ENCODE measurements at regions of chrX and their contacts with region 1.

Region 1: DNA sequence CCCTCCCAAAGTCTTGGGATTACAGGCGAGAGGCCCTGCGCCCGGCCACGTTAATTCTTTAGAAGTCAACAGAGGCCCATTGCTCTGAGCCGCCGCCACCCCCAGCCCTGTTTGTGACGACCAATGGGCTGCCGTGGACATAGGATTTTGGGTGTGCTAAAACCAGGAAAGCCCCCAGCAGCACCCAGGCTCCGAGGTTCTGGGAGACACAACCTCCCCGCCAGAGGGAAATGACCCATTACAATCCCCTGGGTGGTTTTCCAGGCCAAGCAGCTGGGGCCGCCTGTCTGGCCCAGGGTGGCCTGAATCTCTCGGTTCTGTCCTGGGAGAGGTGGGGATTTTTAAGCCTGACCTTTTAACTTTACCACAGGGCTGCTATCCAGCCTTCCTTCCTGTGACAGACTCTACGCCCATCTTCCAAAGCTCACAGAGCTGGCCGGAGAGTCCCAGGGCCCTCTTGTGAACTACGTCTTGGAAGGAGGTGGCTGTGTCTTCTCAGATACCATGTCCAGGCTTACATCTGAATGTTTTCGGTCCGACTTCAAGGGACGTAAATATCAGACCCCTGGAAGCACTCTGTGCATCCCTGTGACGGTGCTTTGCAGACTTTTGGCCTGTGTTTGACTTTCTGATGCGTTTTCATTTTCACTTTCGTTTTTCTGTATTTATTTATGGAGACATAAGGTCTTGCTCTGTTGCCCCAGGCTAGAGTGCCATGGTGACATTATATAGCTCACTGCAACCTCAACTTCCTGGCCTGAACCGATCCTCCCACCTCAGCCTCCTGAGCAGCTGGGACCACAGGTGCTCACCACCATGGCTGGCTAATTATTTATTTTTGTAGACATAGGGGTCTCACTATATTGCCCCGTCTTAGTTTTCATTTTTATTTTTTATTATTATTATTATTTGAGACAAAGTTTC is 36.0 kb downstream of the P2RY8 start:
- DNase-seq: peak in 2 of 3 donors; percentile 41 to 48
- H3K4me3 ChIP-seq: peak overlapping the region in 1 of 3 experiments; percentile 36
- H3K4me3 Mint-ChIP-seq: peak overlapping the region in 1 of 2 donors; percentile 48
- H3K27ac ChIP-seq: peak overlapping the region; percentile 62 to 79
- H3K27ac Mint-ChIP-seq: peak overlapping the region; percentile 59 to 99 (median 90)
- H3K4me1 ChIP-seq: peaks cover 51 to 53% of the 10 kb centered on the region in 2 donors
- H3K4me1 Mint-ChIP-seq: peaks cover 35% of the 10 kb centered on the region
- H3K27me3 ChIP-seq: no peaks in the 10 kb centered on the region
- H3K27me3 Mint-ChIP-seq: peaks cover 0 to 2% (median 2%) of the 10 kb centered on the region in 3 donors
- CTCF ChIP-seq: no peak

Region 2: GRCh38 chrX:1336331-1336943 is 164.5 kb before region 1 on chrX and contains the start of gene IL3RA:
- intact Hi-C with region 1: loop called in 1 of 2 experiments (anchors 10 kb)
- DNase-seq: peak; percentile 95 to 99 (median 97)
- H3K4me3 ChIP-seq: peak within 1 kb of the TSS; percentile 59 to 78 (median 74)
- H3K4me3 Mint-ChIP-seq: peak within 1 kb of the TSS; percentile 95 to 96
- H3K27ac ChIP-seq: peak within 1 kb of the TSS; percentile 87 to 93
- H3K27ac Mint-ChIP-seq: peak within 1 kb of the TSS; percentile 93 to 100 (median 97)
- H3K4me1 ChIP-seq: peaks cover 61 to 63% of the 10 kb centered on the region in 2 donors
- H3K4me1 Mint-ChIP-seq: peaks cover 58% of the 10 kb centered on the region
- H3K27me3 ChIP-seq: no peaks in the 10 kb centered on the region
- H3K27me3 Mint-ChIP-seq: peaks cover 2 to 22% (median 3%) of the 10 kb centered on the region in 3 donors
- CTCF ChIP-seq: no peak
- polyA plus RNA-seq, gene IL3RA: 2.9 to 12.0 (median 4.4) TPM

Region 3: DNA sequence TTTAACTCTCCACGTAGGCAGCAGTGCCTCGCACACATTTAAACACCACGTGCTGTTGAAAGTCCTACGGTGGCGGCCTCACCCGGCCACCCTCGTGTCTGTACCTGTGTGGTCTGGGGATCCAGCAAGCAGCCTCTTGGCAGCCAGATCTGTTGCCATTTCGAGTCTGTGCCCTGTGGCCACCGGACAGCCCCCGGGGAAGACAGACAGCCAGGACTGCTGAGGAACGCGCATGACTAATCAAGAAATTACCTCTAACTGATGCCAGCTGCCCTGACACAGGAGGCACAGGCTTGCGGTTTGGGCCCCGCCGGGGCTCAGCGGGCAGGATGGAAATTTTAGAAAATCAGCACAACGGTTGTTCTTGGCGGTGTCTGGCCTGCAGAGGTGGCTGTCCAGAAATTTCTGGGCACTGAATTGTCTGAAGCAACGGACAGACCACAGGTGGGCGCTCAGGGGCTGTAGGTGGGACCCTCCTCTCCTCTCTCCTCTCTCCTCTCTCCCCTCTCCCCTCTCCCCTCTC is 32.7 kb before region 1 on chrX:
- intact Hi-C with region 1: loop called (anchors 5 kb)
- DNase-seq: peak; percentile 48 to 83 (median 69)
- H3K4me3 ChIP-seq: no peak overlapping the region
- H3K4me3 Mint-ChIP-seq: peak overlapping the region in 1 of 2 donors; percentile 34
- H3K27ac ChIP-seq: peak overlapping the region; percentile 43 to 72
- H3K27ac Mint-ChIP-seq: peak overlapping the region; percentile 18 to 92 (median 68)
- H3K4me1 ChIP-seq: peaks cover 33 to 40% of the 10 kb centered on the region in 2 donors
- H3K4me1 Mint-ChIP-seq: peaks cover 53% of the 10 kb centered on the region
- H3K27me3 ChIP-seq: no peaks in the 10 kb centered on the region
- H3K27me3 Mint-ChIP-seq: peaks cover 0 to 1% (median 0%) of the 10 kb centered on the region in 3 donors
- CTCF ChIP-seq: no peak

Region 4: DNA sequence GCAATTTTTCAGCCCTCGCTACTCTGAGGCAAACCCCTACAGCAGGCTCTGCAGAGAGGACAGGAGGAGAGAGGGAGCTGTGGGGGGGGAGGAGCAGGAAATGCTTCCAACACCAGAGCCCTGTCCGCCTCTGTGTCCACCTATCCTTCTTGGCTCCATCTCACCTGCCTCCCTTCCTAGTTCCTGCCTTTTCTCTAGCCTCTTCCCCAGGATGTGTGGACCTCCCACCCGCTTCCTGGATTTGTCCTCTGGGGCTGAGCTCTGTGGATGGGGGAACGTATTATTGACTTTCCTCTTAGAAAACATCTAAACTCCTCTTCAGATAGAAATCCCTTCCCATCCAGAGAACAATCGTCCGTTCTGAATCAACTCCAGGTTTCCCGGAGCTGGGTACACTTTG is 128.3 kb after region 1 on chrX:
- intact Hi-C with region 1: no loop called
- DNase-seq: no peak
- H3K4me3 ChIP-seq: no peak overlapping the region
- H3K4me3 Mint-ChIP-seq: no peak overlapping the region
- H3K27ac ChIP-seq: no peak overlapping the region
- H3K27ac Mint-ChIP-seq: no peak overlapping the region
- H3K4me1 ChIP-seq: no peaks in the 10 kb centered on the region
- H3K4me1 Mint-ChIP-seq: no peaks in the 10 kb centered on the region
- H3K27me3 ChIP-seq: no peaks in the 10 kb centered on the region
- H3K27me3 Mint-ChIP-seq: peaks cover 2 to 6% (median 5%) of the 10 kb centered on the region in 3 donors
- CTCF ChIP-seq: no peak